ENCODE measurements at regions of chr5 and their contacts with region 1.

Region 1: DNA sequence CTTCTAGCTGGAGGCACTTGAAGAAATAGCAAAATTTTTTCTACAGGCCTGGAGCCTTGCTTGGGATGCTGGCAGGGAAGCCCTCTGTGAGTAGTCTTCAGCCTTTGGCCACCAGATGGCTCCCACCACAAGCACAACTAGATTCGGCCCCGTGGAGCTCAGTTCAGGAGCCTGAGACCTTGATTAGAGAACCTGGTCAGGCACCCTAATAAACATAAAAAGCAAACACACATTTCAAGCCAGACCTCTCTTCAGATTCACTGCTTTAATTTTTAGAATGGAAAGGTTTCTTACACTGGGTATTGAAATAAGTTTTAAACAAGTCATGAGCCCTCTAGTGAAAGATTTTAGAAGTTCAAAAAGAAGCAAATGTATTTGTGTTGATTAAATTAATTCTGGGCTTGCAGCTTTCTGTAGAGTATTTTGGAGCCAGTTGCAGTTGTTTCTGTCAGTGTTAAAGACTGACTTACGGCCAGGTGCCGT is 41.4 kb downstream of the GLRX start:
- DNase-seq: peak; percentile 76
- H3K4me3 Mint-ChIP-seq: peak overlapping the region; percentile 56
- H3K27ac Mint-ChIP-seq: peak overlapping the region; percentile 79
- H3K4me1 Mint-ChIP-seq: peaks cover 27% of the 10 kb centered on the region
- H3K27me3 Mint-ChIP-seq: no peaks in the 10 kb centered on the region

Region 2: DNA sequence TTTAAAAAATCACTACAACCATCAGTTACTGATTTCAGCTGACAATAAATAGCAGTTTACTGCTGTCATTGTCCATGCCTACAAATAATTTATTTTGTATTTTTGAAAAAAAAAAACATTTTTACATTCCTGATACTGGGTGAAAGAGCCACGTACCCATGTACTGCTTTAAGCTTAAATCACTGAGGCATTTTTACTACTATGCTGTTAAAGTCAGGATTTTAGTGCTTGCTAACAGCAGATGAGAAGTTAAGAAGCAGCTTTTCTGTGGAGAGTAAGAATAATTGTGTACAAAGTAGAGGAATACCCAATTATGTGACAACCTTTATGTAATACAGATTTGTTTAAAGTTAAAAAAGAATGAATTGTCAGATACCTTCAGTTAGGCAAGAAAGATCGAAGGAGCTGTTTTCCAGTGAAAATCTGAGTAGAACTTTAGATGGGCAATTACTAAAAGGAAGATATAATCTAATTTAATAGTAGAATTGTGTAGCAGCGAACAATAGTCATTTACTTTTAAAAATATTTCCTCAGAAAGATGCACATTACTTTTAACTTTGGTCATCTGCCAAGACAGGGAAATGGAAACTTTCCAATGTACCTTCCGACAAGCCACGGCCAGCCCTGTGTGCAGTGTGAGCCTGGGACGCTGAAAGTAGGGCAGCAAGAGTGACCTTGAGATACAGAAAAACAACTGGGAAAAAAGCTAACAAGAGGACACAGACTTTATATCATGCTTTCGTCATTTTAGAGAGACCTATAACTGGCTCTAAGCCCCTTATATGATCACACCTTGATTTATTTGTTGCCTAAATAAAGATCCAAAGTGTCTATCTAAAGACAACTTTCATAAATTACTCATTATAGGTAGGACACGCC is 10.1 kb before region 1 on chr5:
- CTCF ChIA-PET with region 1: interaction called, 20 read pairs
- POLR2A ChIA-PET with region 1: no interaction called
- DNase-seq: no peak
- H3K4me3 Mint-ChIP-seq: no peak overlapping the region
- H3K27ac Mint-ChIP-seq: no peak overlapping the region
- H3K4me1 Mint-ChIP-seq: no peaks in the 10 kb centered on the region
- H3K27me3 Mint-ChIP-seq: peaks cover 3% of the 10 kb centered on the region

Region 3: DNA sequence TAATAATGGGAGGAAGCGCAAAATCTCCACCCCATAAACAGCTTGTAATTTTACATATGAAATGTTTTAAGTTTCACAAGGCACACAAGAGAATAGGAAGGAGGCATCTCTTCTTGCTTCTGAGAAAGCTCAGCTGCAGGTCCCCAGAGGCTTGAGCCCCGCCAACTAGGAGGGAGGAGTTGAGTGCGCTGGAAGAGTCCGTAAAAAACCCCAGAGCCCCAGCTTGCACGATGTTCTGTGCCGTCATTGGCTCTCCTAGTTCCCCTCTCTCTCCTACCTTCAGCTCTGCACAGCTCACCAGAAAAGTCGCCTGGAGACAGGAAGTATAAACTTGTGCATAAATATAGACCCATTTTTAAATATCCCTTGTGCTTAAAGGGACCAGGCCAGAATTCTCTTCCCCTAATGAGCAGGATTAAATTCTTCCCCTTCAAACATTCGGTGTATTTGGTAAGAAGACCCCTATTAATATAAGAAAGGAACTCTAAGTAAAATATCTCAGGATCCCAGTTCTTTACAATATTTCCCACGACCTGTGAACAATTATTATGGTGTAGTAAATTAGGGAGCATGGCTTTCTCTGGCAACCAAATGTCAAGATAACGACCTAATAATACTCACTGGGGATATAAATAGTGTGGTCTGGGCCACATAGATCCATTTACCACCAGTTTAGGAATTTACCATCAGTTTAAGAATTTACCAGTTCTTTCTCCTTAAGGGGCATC is 27.7 kb after region 1 on chr5:
- CTCF ChIA-PET with region 1: interaction called, 13 read pairs
- POLR2A ChIA-PET with region 1: no interaction called
- DNase-seq: peak; percentile 90
- H3K4me3 Mint-ChIP-seq: peak overlapping the region; percentile 2
- H3K27ac Mint-ChIP-seq: peak overlapping the region; percentile 86
- H3K4me1 Mint-ChIP-seq: peaks cover 63% of the 10 kb centered on the region
- H3K27me3 Mint-ChIP-seq: no peaks in the 10 kb centered on the region

Region 4: DNA sequence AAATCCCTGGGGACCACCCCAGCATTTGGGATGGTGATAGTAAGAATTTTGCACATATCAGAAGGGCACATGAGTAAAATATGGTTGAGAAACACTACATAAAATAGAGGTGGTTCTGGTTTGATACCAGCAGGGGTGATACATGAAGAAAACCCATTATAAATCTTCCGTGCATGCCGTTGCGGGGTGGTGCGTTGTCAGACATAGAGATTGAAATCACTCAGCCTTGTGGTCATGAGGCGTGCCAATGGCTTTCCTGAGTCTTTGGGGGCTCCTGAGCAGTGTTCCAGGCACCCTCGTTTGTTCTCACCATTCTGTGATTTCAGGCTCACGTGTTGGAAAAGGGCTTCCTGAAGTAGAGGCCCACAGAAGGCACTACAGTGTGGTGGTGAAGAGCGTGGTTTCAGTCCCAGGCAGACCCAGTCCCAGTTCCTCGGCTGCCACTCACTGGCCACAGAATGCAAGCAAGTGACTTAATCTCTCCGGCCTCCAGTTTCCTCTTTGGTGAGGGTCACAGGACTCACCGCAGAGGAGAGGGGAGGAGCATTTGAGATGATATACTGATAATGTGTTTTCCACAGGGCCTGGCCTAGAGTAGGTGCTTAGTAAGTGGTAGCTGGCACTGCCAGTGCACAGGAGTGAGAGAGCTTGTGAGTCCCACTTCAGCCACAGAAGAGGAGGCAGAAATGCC is 61.9 kb after region 1 on chr5:
- CTCF ChIA-PET with region 1: interaction called, 28 read pairs
- POLR2A ChIA-PET with region 1: no interaction called
- DNase-seq: peak; percentile 72
- H3K4me3 Mint-ChIP-seq: no peak overlapping the region
- H3K27ac Mint-ChIP-seq: peak overlapping the region; percentile 64
- H3K4me1 Mint-ChIP-seq: peaks cover 24% of the 10 kb centered on the region
- H3K27me3 Mint-ChIP-seq: peaks cover 8% of the 10 kb centered on the region

Measured in activated CD4-positive, alpha-beta T cell treated with anti-CD3 and anti-CD28 coated beads, Interleukin-2, amount 10 ng/mL, durations not matched to agents 7 days and 5 days (primary cell).